AG04450 (cell line): ENCODE measurements at regions of chr1 and their contacts with region 1.

Region 1: GRCh38 chr1:205591522-205592351 is 40.1 kb downstream of the ELK4 start:
- DNase-seq: no peak
- H3K4me3 ChIP-seq: peak overlapping the region; percentile 55
- H3K27ac ChIP-seq: no peak overlapping the region
- H3K27me3 ChIP-seq: no peaks in the 10 kb centered on the region
- CTCF ChIP-seq: peak; percentile 99

Region 2: GRCh38 chr1:205440476-205441317 is 151.0 kb before region 1 on chr1:
- CTCF ChIA-PET with region 1: no interaction called
- POLR2A ChIA-PET with region 1: no interaction called
- DNase-seq: no peak
- H3K4me3 ChIP-seq: no peak overlapping the region
- H3K27ac ChIP-seq: no peak overlapping the region
- H3K27me3 ChIP-seq: peaks cover 33% of the 10 kb centered on the region
- CTCF ChIP-seq: no peak

Region 3: DNA sequence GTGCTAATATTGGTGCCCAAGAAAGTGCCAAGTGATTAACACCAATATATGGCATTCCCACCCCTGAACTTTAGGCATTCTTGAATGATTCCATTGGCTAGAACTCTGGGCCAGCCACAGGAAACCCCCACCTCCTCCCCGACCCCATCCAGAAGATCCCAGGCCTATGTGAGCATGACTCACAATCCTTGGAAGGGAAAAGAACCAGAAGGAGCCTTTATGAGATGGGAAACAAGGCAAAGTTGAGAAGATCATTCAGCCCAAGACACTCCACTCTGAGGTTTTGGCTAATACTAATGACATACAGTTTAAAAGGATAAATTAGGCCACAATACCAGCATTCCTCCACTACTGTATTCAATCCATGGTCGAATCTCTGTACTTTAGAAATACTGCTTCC is 18.3 kb after region 1 on chr1:
- CTCF ChIA-PET with region 1: interaction called, 11 read pairs
- POLR2A ChIA-PET with region 1: no interaction called
- DNase-seq: no peak
- H3K4me3 ChIP-seq: no peak overlapping the region
- H3K27ac ChIP-seq: no peak overlapping the region
- H3K27me3 ChIP-seq: no peaks in the 10 kb centered on the region
- CTCF ChIP-seq: no peak

Region 4: GRCh38 chr1:205783904-205784303 is 192.2 kb after region 1 on chr1:
- CTCF ChIA-PET with region 1: no interaction called
- POLR2A ChIA-PET with region 1: no interaction called
- DNase-seq: no peak
- H3K4me3 ChIP-seq: no peak overlapping the region
- H3K27ac ChIP-seq: no peak overlapping the region
- H3K27me3 ChIP-seq: no peaks in the 10 kb centered on the region
- CTCF ChIP-seq: no peak

Region 5: GRCh38 chr1:205933671-205934618 is 342.2 kb after region 1 on chr1:
- CTCF ChIA-PET with region 1: no interaction called
- POLR2A ChIA-PET with region 1: no interaction called
- DNase-seq: no peak
- H3K4me3 ChIP-seq: no peak overlapping the region
- H3K27ac ChIP-seq: peak overlapping the region; percentile 55
- H3K27me3 ChIP-seq: peaks cover 12% of the 10 kb centered on the region
- CTCF ChIP-seq: no peak